Kidney (tissue), 22 donors: ENCODE measurements at regions of chr19 and their contacts with region 1.

Region 1: GRCh38 chr19:10251792-10252694 is at the start of gene MRPL4:
- DNase-seq: peak; percentile 98 to 100 (median 99)
- H3K4me3 ChIP-seq: peak within 1 kb of the TSS; percentile 97 to 99 (median 98)
- H3K27ac ChIP-seq: peak within 1 kb of the TSS; percentile 82 to 88
- H3K4me1 ChIP-seq: peaks cover 0 to 8% (median 0%) of the 10 kb centered on the region in 3 donors
- H3K27me3 ChIP-seq: no peaks in the 10 kb centered on the region
- CTCF ChIP-seq: no peak
- total RNA-seq, gene MRPL4: 44.8 TPM

Region 2: DNA sequence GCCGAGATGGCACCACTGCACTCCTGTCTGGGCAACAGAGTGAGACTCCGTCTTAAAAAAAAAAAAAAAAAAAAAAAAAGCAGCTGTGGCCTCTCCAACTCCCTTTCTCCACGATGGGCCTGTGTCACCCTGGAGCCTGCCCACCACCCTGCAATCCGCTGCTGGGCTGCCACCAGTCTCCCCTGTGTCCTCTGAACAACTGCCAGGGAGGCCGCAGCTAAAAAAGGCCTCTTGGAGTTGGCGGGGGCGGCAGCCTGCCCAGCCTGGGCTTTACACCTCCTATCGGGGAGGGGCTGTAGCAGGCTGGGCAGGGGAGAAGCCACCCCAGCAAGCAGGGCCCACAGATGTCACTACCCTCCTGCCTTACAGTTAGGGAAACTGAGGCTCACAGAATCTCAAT is 147.8 kb after region 1 on chr19:
- intact Hi-C with region 1: loop called (anchors 5 kb)
- DNase-seq: no peak
- H3K4me3 ChIP-seq: no peak overlapping the region
- H3K27ac ChIP-seq: no peak overlapping the region
- H3K4me1 ChIP-seq: peaks cover 0 to 26% (median 12%) of the 10 kb centered on the region in 3 donors
- H3K27me3 ChIP-seq: no peaks in the 10 kb centered on the region
- CTCF ChIP-seq: no peak